Activated CD4-positive, alpha-beta memory T cell treated with anti-CD3 and anti-CD28 coated beads, Interleukin-2, amount 10 ng/mL, durations not matched to agents 7 days and 5 days (primary cell): ENCODE measurements at regions of chr11 and their contacts with region 1.

Region 1: GRCh38 chr11:8682303-8683114 is at the starts of genes RPL27A and TRIM66:
- DNase-seq: peak; percentile 99
- H3K4me3 Mint-ChIP-seq: peak within 1 kb of the TSS; percentile 90
- H3K27ac Mint-ChIP-seq: peak within 1 kb of the TSS; percentile 94
- H3K4me1 Mint-ChIP-seq: peaks cover 50% of the 10 kb centered on the region
- H3K27me3 Mint-ChIP-seq: no peaks in the 10 kb centered on the region
- total RNA-seq, gene RPL27A: 817 to 856 TPM
- total RNA-seq, gene TRIM66: 17.8 to 22.4 TPM

Region 2: DNA sequence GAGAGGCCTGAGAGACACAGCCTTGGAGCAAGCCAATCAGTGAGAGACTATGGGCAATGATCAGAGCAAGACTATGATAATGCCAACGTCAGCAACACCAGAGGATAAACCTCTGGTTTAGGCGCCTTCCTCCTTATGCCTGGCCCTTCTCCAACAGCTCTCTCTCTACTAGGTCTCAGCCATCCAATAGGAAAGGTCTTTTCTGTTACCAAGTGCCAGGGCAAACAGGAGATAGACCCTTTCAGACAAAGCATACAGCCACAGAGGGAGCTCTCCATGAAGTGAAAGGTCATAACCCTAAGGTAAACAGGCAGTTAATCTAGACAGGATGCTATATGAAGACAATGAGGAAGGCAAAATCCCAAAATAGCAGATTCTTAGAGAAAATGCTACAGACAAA is 98.0 kb before region 1 on chr11:
- CTCF ChIA-PET with region 1: no interaction called
- POLR2A ChIA-PET with region 1: no interaction called
- DNase-seq: no peak
- H3K4me3 Mint-ChIP-seq: no peak overlapping the region
- H3K27ac Mint-ChIP-seq: no peak overlapping the region
- H3K4me1 Mint-ChIP-seq: no peaks in the 10 kb centered on the region
- H3K27me3 Mint-ChIP-seq: peaks cover 28% of the 10 kb centered on the region

Region 3: DNA sequence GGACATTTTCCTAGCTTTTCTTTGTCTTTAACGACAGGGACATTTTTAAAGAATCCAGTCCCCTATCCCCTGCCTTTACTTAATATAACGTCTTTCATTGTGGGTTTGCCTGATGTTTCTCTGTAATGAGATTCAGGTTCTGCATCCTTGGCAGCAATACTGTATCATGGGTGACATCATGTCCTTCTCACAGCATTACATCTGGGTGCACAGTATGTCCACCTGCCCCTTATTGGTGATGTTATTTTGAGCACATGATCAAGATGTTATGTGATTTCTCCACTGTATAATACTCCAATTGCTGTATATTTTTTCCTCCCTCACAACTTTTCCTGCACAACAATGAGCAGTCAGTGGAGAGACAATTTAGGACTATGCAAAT is 78.8 kb before region 1 on chr11:
- CTCF ChIA-PET with region 1: no interaction called
- POLR2A ChIA-PET with region 1: no interaction called
- DNase-seq: no peak
- H3K4me3 Mint-ChIP-seq: no peak overlapping the region
- H3K27ac Mint-ChIP-seq: no peak overlapping the region
- H3K4me1 Mint-ChIP-seq: no peaks in the 10 kb centered on the region
- H3K27me3 Mint-ChIP-seq: peaks cover 28% of the 10 kb centered on the region

Region 4: GRCh38 chr11:8658321-8659057 is 24.0 kb before region 1 on chr11:
- CTCF ChIA-PET with region 1: no interaction called
- POLR2A ChIA-PET with region 1: interaction called, 22 read pairs
- DNase-seq: no peak
- H3K4me3 Mint-ChIP-seq: no peak overlapping the region
- H3K27ac Mint-ChIP-seq: no peak overlapping the region
- H3K4me1 Mint-ChIP-seq: peaks cover 21% of the 10 kb centered on the region
- H3K27me3 Mint-ChIP-seq: no peaks in the 10 kb centered on the region

Region 5: DNA sequence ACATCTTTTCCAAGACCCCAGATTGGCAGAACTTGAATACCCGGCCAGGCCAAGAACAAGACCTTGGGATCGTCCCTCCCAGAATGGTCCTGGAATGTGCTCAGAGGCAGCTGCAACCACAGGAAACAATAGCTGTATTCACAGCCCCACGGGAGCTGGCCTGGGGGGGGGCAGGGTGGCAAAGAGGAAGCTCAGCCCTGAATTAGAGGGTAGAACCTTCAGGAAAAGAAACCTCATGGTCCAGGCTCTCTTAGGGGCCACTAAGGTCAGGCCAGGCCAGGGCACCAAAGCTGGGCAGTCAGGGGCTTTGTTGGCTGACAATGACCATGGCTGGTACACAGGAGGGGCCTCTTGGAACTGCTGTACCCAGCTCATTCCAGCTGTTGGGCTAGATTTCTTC is 17.4 kb after region 1 on chr11:
- CTCF ChIA-PET with region 1: no interaction called
- POLR2A ChIA-PET with region 1: interaction called, 34 read pairs
- DNase-seq: no peak
- H3K4me3 Mint-ChIP-seq: no peak overlapping the region
- H3K27ac Mint-ChIP-seq: no peak overlapping the region
- H3K4me1 Mint-ChIP-seq: peaks cover 4% of the 10 kb centered on the region
- H3K27me3 Mint-ChIP-seq: no peaks in the 10 kb centered on the region

Region 6: DNA sequence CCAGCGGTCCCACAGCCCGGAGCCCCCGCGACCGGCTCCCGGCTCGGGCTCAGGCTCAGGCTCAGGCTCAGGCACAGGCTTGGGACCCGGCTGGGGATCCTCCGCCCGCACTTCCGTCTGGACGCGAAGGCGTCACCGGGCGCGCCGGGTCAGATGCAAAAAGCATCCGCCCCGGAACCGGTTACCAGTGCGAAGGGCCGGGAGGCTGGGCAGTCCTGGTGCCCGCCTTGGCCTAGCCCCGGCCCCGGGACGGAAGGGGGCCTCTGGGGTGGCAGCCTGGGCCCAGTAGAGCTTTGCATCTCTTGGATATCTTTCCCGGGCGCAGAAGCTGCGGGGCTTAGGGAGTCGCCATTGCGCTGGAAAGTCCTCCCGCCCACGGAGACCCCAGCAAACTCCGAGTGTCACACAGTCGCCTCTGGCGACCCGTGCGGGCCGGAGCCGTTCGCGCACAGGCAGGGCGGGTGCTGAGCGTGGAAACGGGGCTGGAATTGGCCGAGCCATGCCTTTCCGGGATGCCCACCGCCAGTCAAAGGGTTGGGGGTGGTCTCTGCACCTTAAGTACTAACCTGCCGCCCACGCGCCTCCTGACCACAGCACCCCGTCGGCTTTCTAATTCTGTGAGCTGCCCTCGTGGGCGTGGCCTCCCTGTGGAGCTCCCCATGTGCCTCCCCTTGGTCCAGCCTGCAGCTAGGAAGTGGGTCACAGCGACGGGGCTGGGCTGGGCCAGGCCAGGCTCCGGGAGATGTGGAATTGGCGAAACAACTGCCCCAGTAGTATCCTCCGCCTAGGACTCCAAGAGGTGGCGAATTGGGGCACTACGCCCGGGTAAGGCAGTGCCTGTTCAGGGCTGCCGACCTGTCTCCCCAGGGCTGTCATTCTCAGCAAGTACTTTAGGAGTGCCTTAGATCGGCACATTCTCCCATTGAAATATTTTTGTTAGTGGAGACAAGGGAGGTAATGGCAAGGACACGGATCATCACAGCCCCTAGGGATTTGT is 282.1 kb after region 1 on chr11 and contains the start of gene TMEM9B:
- CTCF ChIA-PET with region 1: interaction called, 5 read pairs
- POLR2A ChIA-PET with region 1: interaction called, 39 read pairs
- DNase-seq: peak; percentile 88
- H3K4me3 Mint-ChIP-seq: peak within 1 kb of the TSS; percentile 88
- H3K27ac Mint-ChIP-seq: peak within 1 kb of the TSS; percentile 91
- H3K4me1 Mint-ChIP-seq: peaks cover 32% of the 10 kb centered on the region
- H3K27me3 Mint-ChIP-seq: no peaks in the 10 kb centered on the region
- total RNA-seq, gene TMEM9B: 34.2 to 34.8 TPM

Region 7: DNA sequence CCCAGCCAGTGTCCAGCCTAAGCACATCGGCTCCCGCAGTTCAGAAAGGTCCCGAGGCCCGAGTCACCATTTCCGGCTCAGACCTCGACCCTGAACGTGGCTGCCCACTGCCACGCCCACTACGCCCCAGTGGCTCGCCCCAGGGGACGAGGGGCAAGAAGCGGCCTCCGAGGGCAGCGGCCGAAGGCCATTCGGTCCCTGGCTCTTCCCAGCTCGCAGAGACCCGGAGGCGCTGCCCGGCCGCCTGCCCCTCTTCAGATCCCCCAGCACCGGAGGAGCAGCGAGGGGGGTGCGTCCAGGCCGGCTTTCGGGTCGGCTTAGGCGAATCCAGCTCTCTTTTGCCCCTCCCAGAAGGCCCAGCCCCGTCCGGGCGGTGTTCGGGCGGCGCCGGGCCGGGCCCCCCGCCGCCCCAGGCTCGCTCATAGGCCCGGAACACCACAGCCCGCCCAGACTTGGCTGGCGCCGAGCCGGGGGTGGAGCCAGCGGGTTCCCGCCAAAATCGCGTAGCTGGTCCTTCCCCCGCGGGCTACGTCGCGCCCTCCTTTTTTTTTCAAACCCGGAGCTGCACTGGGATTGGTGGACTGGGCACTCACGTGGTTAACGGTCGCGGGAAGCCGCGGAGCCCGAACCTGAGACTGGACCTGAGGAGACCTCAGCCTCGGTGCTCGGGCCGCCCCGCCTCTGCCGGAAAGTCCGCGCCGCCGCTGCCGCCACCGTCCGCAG is 890.7 kb after region 1 on chr11 and contains the start of gene WEE1:
- CTCF ChIA-PET with region 1: no interaction called
- POLR2A ChIA-PET with region 1: interaction called, 18 read pairs
- DNase-seq: peak; percentile 98
- H3K4me3 Mint-ChIP-seq: peak within 1 kb of the TSS; percentile 98
- H3K27ac Mint-ChIP-seq: peak within 1 kb of the TSS; percentile 83
- H3K4me1 Mint-ChIP-seq: peaks cover 37% of the 10 kb centered on the region
- H3K27me3 Mint-ChIP-seq: peaks cover 2% of the 10 kb centered on the region
- total RNA-seq, gene WEE1: 62.8 to 64.1 TPM